ENCODE measurements at regions of chr3 and their contacts with region 1.

Region 1: GRCh38 chr3:143644370-143645089 is 203.7 kb downstream of the SLC9A9 start:
- DNase-seq: peak; percentile 87
- H3K4me3 ChIP-seq: no peak overlapping the region
- H3K27ac ChIP-seq: no peak overlapping the region
- H3K4me1 ChIP-seq: peaks cover 11% of the 10 kb centered on the region
- H3K27me3 ChIP-seq: no peaks in the 10 kb centered on the region
- CTCF ChIP-seq: peak; percentile 55 to 60
- POLR2A ChIP-seq: no peak

Region 2: GRCh38 chr3:143060906-143061305 is 583.6 kb before region 1 on chr3:
- CTCF ChIA-PET with region 1: interaction called, 5 read pairs
- POLR2A ChIA-PET with region 1: no interaction called
- dilution Hi-C with region 1: no loop called
- intact Hi-C with region 1: loop called (anchors 10 kb)
- DNase-seq: no peak
- H3K4me3 ChIP-seq: no peak overlapping the region
- H3K27ac ChIP-seq: no peak overlapping the region
- H3K4me1 ChIP-seq: peaks cover 4% of the 10 kb centered on the region
- H3K27me3 ChIP-seq: no peaks in the 10 kb centered on the region
- CTCF ChIP-seq: no peak
- POLR2A ChIP-seq: no peak

Region 3: GRCh38 chr3:143124601-143125520 is 519.7 kb before region 1 on chr3:
- CTCF ChIA-PET with region 1: interaction called, 31 read pairs
- POLR2A ChIA-PET with region 1: no interaction called
- dilution Hi-C with region 1: no loop called
- intact Hi-C with region 1: loop called (anchors 1 kb)
- DNase-seq: no peak
- H3K4me3 ChIP-seq: no peak overlapping the region
- H3K27ac ChIP-seq: no peak overlapping the region
- H3K4me1 ChIP-seq: no peaks in the 10 kb centered on the region
- H3K27me3 ChIP-seq: no peaks in the 10 kb centered on the region
- CTCF ChIP-seq: no peak
- POLR2A ChIP-seq: no peak

Region 4: GRCh38 chr3:143329567-143330211 is 314.8 kb before region 1 on chr3:
- CTCF ChIA-PET with region 1: interaction called, 5 read pairs
- POLR2A ChIA-PET with region 1: no interaction called
- dilution Hi-C with region 1: no loop called
- intact Hi-C with region 1: loop called (anchors 2 kb)
- DNase-seq: peak; percentile 62
- H3K4me3 ChIP-seq: no peak overlapping the region
- H3K27ac ChIP-seq: no peak overlapping the region
- H3K4me1 ChIP-seq: peaks cover 37% of the 10 kb centered on the region
- H3K27me3 ChIP-seq: no peaks in the 10 kb centered on the region
- CTCF ChIP-seq: peak in 1 of 2 donors; percentile 5
- POLR2A ChIP-seq: no peak

Region 5: GRCh38 chr3:143433787-143434378 is 210.6 kb before region 1 on chr3:
- CTCF ChIA-PET with region 1: interaction called, 62 read pairs
- POLR2A ChIA-PET with region 1: no interaction called
- dilution Hi-C with region 1: no loop called
- intact Hi-C with region 1: loop called (anchors 1 kb)
- DNase-seq: no peak
- H3K4me3 ChIP-seq: no peak overlapping the region
- H3K27ac ChIP-seq: no peak overlapping the region
- H3K4me1 ChIP-seq: no peaks in the 10 kb centered on the region
- H3K27me3 ChIP-seq: no peaks in the 10 kb centered on the region
- CTCF ChIP-seq: peak; percentile 35 to 37
- POLR2A ChIP-seq: no peak

Region 6: DNA sequence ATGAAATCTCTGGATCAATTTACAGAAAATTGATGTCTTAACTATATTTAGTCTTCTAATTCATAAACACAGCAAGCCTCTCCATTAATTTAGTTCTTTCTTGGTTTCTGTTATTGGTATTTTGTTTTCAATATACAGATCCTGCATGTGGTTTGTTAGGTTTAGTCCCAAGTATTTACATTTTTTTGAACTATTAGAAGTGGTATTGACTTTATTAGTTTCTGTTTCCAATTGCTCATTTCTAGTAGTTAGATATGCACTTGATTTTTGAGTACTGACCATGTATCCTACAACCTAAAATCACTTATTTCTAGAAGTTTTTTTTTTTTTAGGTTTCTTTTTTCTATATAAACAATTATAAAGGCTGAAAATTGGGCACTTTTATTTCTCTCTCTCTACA is 189.1 kb before region 1 on chr3:
- CTCF ChIA-PET with region 1: no interaction called
- POLR2A ChIA-PET with region 1: no interaction called
- dilution Hi-C with region 1: no loop called
- intact Hi-C with region 1: no loop called
- DNase-seq: no peak
- H3K4me3 ChIP-seq: no peak overlapping the region
- H3K27ac ChIP-seq: no peak overlapping the region
- H3K4me1 ChIP-seq: no peaks in the 10 kb centered on the region
- H3K27me3 ChIP-seq: no peaks in the 10 kb centered on the region
- CTCF ChIP-seq: no peak
- POLR2A ChIP-seq: no peak

Region 7: DNA sequence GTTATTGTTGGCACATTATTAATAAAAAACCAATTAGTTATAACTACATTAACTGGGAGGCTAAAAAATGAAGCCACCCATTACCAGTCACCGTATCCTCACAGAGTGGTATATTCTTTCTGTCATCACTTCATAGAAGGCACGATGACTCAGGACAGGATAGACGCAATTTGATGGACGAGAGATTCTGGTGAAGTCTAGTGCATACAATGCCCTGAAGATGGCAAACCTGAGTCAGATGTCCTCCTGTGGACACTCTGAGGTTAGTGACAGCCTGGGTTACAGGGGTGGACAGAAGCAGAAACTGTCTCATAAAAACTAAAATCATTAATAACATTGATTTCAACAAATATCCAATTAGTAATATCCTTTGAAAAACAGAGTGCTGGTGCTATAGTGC is 53.4 kb after region 1 on chr3:
- CTCF ChIA-PET with region 1: no interaction called
- POLR2A ChIA-PET with region 1: no interaction called
- dilution Hi-C with region 1: no loop called
- intact Hi-C with region 1: no loop called
- DNase-seq: no peak
- H3K4me3 ChIP-seq: no peak overlapping the region
- H3K27ac ChIP-seq: no peak overlapping the region
- H3K4me1 ChIP-seq: no peaks in the 10 kb centered on the region
- H3K27me3 ChIP-seq: no peaks in the 10 kb centered on the region
- CTCF ChIP-seq: no peak
- POLR2A ChIP-seq: no peak

Region 8: DNA sequence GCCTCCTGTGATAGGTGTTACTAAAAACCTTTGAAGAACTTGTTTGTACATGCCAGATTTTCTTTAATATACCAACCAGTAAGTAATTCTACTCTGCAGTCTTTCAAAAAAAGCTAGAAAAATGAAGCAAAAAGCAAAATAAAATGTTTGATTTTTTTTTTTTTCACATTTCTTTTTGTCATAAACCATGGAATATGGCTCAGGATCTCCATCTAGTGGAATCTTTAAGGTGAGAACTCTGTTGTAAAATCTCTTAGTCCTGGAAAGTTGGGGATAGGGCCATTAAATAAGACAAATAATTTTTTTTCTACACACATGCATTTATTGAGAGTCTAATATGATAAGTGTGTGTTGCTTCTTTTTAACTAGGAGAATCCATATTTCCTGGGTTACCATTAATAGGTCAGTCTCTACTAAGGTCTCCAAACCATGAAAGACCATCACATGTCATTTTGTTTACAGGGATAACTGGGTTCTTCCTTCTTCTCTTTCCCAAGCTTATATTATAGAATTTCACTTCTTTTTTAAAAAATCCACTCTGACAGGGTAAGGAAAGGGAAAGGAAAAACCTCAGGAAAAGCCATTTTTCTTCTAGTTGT is 119.1 kb after region 1 on chr3:
- CTCF ChIA-PET with region 1: no interaction called
- POLR2A ChIA-PET with region 1: no interaction called
- dilution Hi-C with region 1: no loop called
- intact Hi-C with region 1: loop called (anchors 5 kb)
- DNase-seq: peak; percentile 38
- H3K4me3 ChIP-seq: no peak overlapping the region
- H3K27ac ChIP-seq: no peak overlapping the region
- H3K4me1 ChIP-seq: no peaks in the 10 kb centered on the region
- H3K27me3 ChIP-seq: no peaks in the 10 kb centered on the region
- CTCF ChIP-seq: peak; percentile 18 to 22
- POLR2A ChIP-seq: no peak

Region 9: GRCh38 chr3:143935678-143936077 is 291.1 kb after region 1 on chr3:
- CTCF ChIA-PET with region 1: no interaction called
- POLR2A ChIA-PET with region 1: no interaction called
- dilution Hi-C with region 1: no loop called
- intact Hi-C with region 1: no loop called
- DNase-seq: no peak
- H3K4me3 ChIP-seq: no peak overlapping the region
- H3K27ac ChIP-seq: no peak overlapping the region
- H3K4me1 ChIP-seq: no peaks in the 10 kb centered on the region
- H3K27me3 ChIP-seq: peaks cover 0 to 2% of the 10 kb centered on the region in 2 experiments
- CTCF ChIP-seq: no peak
- POLR2A ChIP-seq: no peak

Measured in endothelial cell of umbilical vein (primary cell).